ENCODE measurements at regions of chr11 and their contacts with region 1.

Region 1: GRCh38 chr11:9748361-9748970 is 84.6 kb downstream of the SWAP70 start:
- DNase-seq: no peak
- H3K4me3 ChIP-seq: no peak overlapping the region
- CTCF ChIP-seq: peak; percentile 54

Region 2: GRCh38 chr11:9573052-9573774 is 175.3 kb before region 1 on chr11 and contains the start of gene WEE1:
- CTCF ChIA-PET with region 1: interaction called, 13 read pairs
- POLR2A ChIA-PET with region 1: no interaction called
- DNase-seq: peak; percentile 79
- H3K4me3 ChIP-seq: peak within 1 kb of the TSS; percentile 81
- CTCF ChIP-seq: no peak

Region 3: GRCh38 chr11:9732453-9732852 is 16.0 kb before region 1 on chr11:
- CTCF ChIA-PET with region 1: interaction called, 33 read pairs
- POLR2A ChIA-PET with region 1: no interaction called
- DNase-seq: no peak
- H3K4me3 ChIP-seq: no peak overlapping the region
- CTCF ChIP-seq: no peak

Measured in AG04449 (cell line).